ENCODE measurements at regions of chr2 and their contacts with region 1.

Region 1: GRCh38 chr2:231034291-231034882 is 2.9 kb upstream of the C2orf72 start:
- DNase-seq: peak; percentile 66 to 70
- H3K4me3 ChIP-seq: no peak overlapping the region
- H3K4me3 Mint-ChIP-seq: no peak overlapping the region
- H3K27ac Mint-ChIP-seq: peak overlapping the region; percentile 97
- H3K4me1 ChIP-seq: peaks cover 63% of the 10 kb centered on the region
- H3K4me1 Mint-ChIP-seq: peaks cover 17% of the 10 kb centered on the region
- H3K27me3 ChIP-seq: no peaks in the 10 kb centered on the region
- H3K27me3 Mint-ChIP-seq: no peaks in the 10 kb centered on the region
- CTCF ChIP-seq: no peak

Region 2: GRCh38 chr2:230018153-230018552 is 1016.2 kb before region 1 on chr2:
- CTCF ChIA-PET with region 1: no interaction called
- POLR2A ChIA-PET with region 1: no interaction called
- intact Hi-C with region 1: no loop called
- DNase-seq: no peak
- H3K4me3 ChIP-seq: no peak overlapping the region
- H3K4me3 Mint-ChIP-seq: no peak overlapping the region
- H3K27ac Mint-ChIP-seq: no peak overlapping the region
- H3K4me1 ChIP-seq: no peaks in the 10 kb centered on the region
- H3K4me1 Mint-ChIP-seq: no peaks in the 10 kb centered on the region
- H3K27me3 ChIP-seq: no peaks in the 10 kb centered on the region
- H3K27me3 Mint-ChIP-seq: peaks cover 14% of the 10 kb centered on the region
- CTCF ChIP-seq: no peak

Region 3: GRCh38 chr2:231007286-231008007 is 26.9 kb before region 1 on chr2:
- CTCF ChIA-PET with region 1: interaction called, 3 read pairs
- POLR2A ChIA-PET with region 1: interaction called, 6 read pairs
- intact Hi-C with region 1: loop called (anchors 1 kb)
- DNase-seq: peak; percentile 91 to 93
- H3K4me3 ChIP-seq: no peak overlapping the region
- H3K4me3 Mint-ChIP-seq: peak overlapping the region; percentile 58
- H3K27ac Mint-ChIP-seq: peak overlapping the region; percentile 97
- H3K4me1 ChIP-seq: peaks cover 52% of the 10 kb centered on the region
- H3K4me1 Mint-ChIP-seq: peaks cover 38% of the 10 kb centered on the region
- H3K27me3 ChIP-seq: no peaks in the 10 kb centered on the region
- H3K27me3 Mint-ChIP-seq: no peaks in the 10 kb centered on the region
- CTCF ChIP-seq: no peak

Region 4: DNA sequence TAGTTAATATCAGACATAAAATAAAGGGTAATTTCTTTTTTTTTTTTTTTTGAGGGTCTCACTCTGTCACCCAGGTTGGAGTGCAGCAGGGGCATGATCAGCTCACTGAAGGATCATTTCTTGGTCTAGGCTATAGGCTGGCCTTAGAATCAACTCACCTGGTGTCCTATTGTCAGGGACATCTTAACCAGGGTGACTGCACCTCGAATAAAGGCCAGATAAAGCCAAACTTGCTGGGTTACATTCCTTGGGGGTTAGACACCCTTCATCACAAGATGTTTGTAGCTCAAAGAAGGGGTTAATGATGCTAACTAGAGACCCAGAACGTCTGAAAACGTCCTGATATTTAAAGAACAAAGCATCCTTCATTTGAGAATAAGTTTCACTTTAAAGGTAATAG is 20.6 kb before region 1 on chr2:
- CTCF ChIA-PET with region 1: no interaction called
- POLR2A ChIA-PET with region 1: interaction called, 5 read pairs
- intact Hi-C with region 1: loop called (anchors 1 kb)
- DNase-seq: peak; percentile 57 to 63
- H3K4me3 ChIP-seq: no peak overlapping the region
- H3K4me3 Mint-ChIP-seq: no peak overlapping the region
- H3K27ac Mint-ChIP-seq: no peak overlapping the region
- H3K4me1 ChIP-seq: peaks cover 70% of the 10 kb centered on the region
- H3K4me1 Mint-ChIP-seq: peaks cover 50% of the 10 kb centered on the region
- H3K27me3 ChIP-seq: no peaks in the 10 kb centered on the region
- H3K27me3 Mint-ChIP-seq: no peaks in the 10 kb centered on the region
- CTCF ChIP-seq: no peak